GM12878 (cell line): ENCODE measurements at regions of chr12 and their contacts with region 1.

Region 1: DNA sequence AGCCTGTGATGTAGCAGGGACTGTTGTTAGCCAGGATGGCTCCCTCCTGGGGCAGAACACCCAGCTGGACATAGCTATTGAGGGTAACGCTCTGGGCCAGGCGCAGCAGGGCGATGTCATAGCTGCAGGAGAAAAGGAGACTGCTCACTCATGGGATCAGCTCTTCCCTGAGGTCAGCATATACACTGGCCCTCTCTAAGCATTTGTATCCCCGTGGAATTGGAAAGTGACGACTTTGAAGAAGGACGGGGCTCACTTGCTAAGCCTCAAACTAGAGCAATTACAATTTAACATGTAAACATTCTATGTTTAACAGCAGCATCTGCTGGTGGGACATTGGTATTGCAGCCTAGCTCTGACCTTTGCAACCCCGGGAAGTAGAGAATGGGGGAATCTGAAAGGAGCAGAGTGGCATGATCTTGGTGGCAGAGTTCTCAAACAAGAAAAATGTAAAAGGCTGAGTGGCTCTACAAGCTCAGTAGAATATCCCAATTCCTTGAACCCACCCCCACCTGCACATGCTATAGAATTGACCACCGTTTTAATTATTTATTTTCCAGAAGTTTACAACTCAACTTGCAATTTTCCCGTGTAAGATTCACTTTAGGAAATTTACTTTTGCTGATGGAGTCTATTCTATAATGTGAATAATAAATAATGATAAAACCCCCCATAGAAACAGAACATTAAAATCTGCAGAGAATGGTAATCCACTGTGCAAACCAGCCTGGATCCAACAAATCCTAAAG is 5.0 kb downstream of the CELA1 start:
- DNase-seq: peak; percentile 65
- ATAC-seq: peak; percentile 89
- H3K4me3 ChIP-seq: no peak overlapping the region
- H3K27ac ChIP-seq: no peak overlapping the region
- H3K4me1 ChIP-seq: peaks cover 20% of the 10 kb centered on the region
- H3K27me3 ChIP-seq: no peaks in the 10 kb centered on the region
- CTCF ChIP-seq: peak; percentile 99 to 100 (median 99); a peak in 5 of 6 replicates
- EP300 ChIP-seq: no peak
- POLR2A ChIP-seq: no peak
- RAD21 ChIP-seq: peak; percentile 98

Region 2: GRCh38 chr12:50763639-50764285 is 577.7 kb before region 1 on chr12 and contains the start of gene ATF1:
- CTCF ChIA-PET with region 1: interaction called, 44 read pairs
- POLR2A ChIA-PET with region 1: interaction called, 5 read pairs
- RAD21 ChIA-PET with region 1: interaction called, 37 read pairs
- SMC1A ChIA-PET with region 1: interaction called, 5 read pairs
- in situ Hi-C with region 1: no loop called
- intact Hi-C with region 1: no loop called
- DNase-seq: peak; percentile 73
- ATAC-seq: peak; percentile 85
- H3K4me3 ChIP-seq: peak within 1 kb of the TSS; percentile 96
- H3K27ac ChIP-seq: peak within 1 kb of the TSS; percentile 97
- H3K4me1 ChIP-seq: peaks cover 4% of the 10 kb centered on the region; the same call in 1 of the 2 replicates
- H3K27me3 ChIP-seq: no peaks in the 10 kb centered on the region
- CTCF ChIP-seq: no peak
- EP300 ChIP-seq: 0 out of 4 replicates have a peak, but pooled peaks of 1 of the 2 experiments have one; percentile 14
- POLR2A ChIP-seq: peak; percentile 95
- RAD21 ChIP-seq: no peak
- polyA plus RNA-seq, gene ATF1: 15.4 to 17.0 TPM

Region 3: DNA sequence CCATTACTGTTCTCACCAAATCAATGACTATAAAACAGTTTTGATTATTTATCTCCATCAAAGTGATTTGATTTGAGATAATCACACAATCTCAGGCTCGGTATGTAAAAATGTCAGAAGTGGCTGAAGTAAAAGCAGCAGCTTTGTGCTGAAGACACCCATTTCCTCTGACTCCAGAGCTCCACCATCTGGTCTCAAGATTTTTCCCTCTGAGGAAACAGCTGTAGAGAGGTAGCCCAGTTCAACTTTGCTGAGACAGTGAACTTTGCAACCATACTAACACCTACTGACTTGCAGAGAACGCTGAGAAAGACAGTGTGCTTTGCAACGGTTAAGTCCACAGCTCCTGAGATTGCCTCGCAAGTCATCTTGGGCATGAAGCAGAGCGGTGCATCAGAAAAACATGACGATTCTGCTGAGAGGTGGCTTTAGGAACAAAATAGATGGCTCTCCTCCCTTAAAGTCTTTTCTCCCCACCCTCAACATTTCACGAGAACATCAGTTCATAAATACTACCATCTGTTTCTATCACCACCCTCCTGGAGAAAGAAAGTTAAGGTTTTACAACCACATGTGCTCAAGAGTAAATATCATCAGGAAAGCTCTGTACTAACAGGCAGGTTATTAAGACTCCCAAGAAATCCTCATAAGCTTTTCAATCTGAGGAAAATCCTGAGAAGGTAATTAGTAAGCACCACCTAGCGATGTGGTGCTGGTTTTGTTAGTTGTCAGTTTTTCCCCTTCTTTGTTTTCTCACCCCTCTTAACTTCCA is 354.3 kb before region 1 on chr12:
- CTCF ChIA-PET with region 1: interaction called, 29 read pairs
- POLR2A ChIA-PET with region 1: no interaction called
- RAD21 ChIA-PET with region 1: interaction called, 14 read pairs
- SMC1A ChIA-PET with region 1: interaction called, 11 read pairs
- in situ Hi-C with region 1: no loop called
- intact Hi-C with region 1: no loop called
- DNase-seq: no peak
- ATAC-seq: peak; percentile 69
- H3K4me3 ChIP-seq: no peak overlapping the region
- H3K27ac ChIP-seq: no peak overlapping the region
- H3K4me1 ChIP-seq: peaks cover 17% of the 10 kb centered on the region
- H3K27me3 ChIP-seq: no peaks in the 10 kb centered on the region
- CTCF ChIP-seq: peak; percentile 45 to 68 (median 64); a peak in 5 of 6 replicates
- EP300 ChIP-seq: no peak
- POLR2A ChIP-seq: no peak
- RAD21 ChIP-seq: peak; percentile 77

Region 4: GRCh38 chr12:51083126-51083833 is 258.2 kb before region 1 on chr12 and contains the start of gene CSRNP2:
- CTCF ChIA-PET with region 1: interaction called, 10 read pairs
- POLR2A ChIA-PET with region 1: no interaction called
- RAD21 ChIA-PET with region 1: no interaction called
- SMC1A ChIA-PET with region 1: interaction called, 3 read pairs
- in situ Hi-C with region 1: no loop called
- intact Hi-C with region 1: no loop called
- DNase-seq: peak; percentile 59
- ATAC-seq: peak; percentile 99
- H3K4me3 ChIP-seq: peak within 1 kb of the TSS; percentile 83
- H3K27ac ChIP-seq: peak within 1 kb of the TSS; percentile 18; the same call in 1 of the 2 replicates
- H3K4me1 ChIP-seq: peaks cover 5% of the 10 kb centered on the region; the same call in 1 of the 2 replicates
- H3K27me3 ChIP-seq: no peaks in the 10 kb centered on the region
- CTCF ChIP-seq: peak in 1 of 3 experiments; percentile 26; a peak in 2 of 6 replicates
- EP300 ChIP-seq: no peak
- POLR2A ChIP-seq: peak; percentile 100
- RAD21 ChIP-seq: no peak
- polyA plus RNA-seq, gene CSRNP2: 1.2 to 1.4 TPM

Region 5: GRCh38 chr12:51254592-51254991 is 86.8 kb before region 1 on chr12:
- CTCF ChIA-PET with region 1: interaction called, 16 read pairs
- POLR2A ChIA-PET with region 1: no interaction called
- RAD21 ChIA-PET with region 1: interaction called, 8 read pairs
- SMC1A ChIA-PET with region 1: interaction called, 11 read pairs
- in situ Hi-C with region 1: no loop called
- intact Hi-C with region 1: no loop called
- DNase-seq: no peak
- ATAC-seq: no peak
- H3K4me3 ChIP-seq: no peak overlapping the region
- H3K27ac ChIP-seq: no peak overlapping the region
- H3K4me1 ChIP-seq: no peaks in the 10 kb centered on the region
- H3K27me3 ChIP-seq: no peaks in the 10 kb centered on the region
- CTCF ChIP-seq: no peak
- EP300 ChIP-seq: no peak
- POLR2A ChIP-seq: no peak
- RAD21 ChIP-seq: no peak

Region 6: DNA sequence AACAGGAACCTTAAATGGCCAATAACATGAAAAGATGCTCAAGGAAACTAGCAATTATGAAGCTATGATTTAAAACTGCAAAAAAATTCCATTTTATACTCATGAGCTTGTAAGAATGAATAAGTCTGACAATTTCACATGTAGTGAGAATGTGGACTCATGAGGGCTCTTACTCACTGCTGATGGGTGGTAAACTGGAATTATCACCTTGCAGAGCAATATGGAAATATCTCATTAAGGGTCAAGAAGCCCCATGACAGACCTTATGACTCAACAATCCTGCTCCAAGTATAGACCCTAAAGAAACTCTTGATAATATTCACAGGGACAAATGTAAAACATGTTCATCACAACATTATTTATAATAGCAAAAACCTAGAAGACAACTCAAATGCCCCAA is 47.7 kb before region 1 on chr12:
- CTCF ChIA-PET with region 1: interaction called, 28 read pairs
- POLR2A ChIA-PET with region 1: no interaction called
- RAD21 ChIA-PET with region 1: interaction called, 5 read pairs
- SMC1A ChIA-PET with region 1: interaction called, 8 read pairs
- in situ Hi-C with region 1: no loop called
- intact Hi-C with region 1: no loop called
- DNase-seq: no peak
- ATAC-seq: no peak
- H3K4me3 ChIP-seq: no peak overlapping the region
- H3K27ac ChIP-seq: no peak overlapping the region
- H3K4me1 ChIP-seq: no peaks in the 10 kb centered on the region
- H3K27me3 ChIP-seq: no peaks in the 10 kb centered on the region
- CTCF ChIP-seq: no peak
- EP300 ChIP-seq: no peak
- POLR2A ChIP-seq: no peak
- RAD21 ChIP-seq: no peak

Region 7: DNA sequence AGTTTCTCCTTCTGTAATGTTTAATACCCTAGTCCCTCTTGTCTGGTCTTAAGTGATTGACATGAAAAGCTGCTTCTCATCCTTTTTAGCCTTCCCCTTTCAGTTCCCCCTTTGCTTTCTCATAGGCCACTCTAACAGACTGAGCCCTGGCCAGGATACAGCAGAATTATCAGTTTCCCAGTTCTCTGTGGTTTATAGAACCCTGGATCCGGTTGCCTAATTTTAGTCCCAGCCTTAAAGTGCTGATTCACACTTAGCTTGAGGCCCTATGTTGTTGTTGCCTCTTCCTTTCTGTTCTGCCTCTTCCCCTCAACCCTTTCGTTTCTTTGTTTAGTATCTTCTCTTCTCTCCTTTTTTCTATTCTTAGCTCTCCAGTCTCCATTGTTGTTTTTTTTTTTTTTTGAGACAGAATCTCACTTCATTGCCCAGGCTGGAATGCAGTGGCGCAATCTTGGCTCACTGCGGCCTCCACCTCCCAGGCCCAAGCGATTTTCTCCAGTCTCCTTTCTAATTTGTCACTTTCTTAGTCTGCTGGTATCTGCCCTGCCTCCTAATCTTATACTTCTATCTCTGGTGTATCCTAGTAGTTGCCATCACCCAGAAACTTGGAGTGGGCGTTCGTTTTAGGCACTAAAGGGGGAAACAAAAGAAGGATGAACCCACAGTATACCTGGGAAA is 14.5 kb before region 1 on chr12:
- CTCF ChIA-PET with region 1: interaction called, 54 read pairs
- POLR2A ChIA-PET with region 1: interaction called, 3 read pairs
- RAD21 ChIA-PET with region 1: interaction called, 15 read pairs
- SMC1A ChIA-PET with region 1: interaction called, 58 read pairs
- in situ Hi-C with region 1: no loop called
- intact Hi-C with region 1: no loop called
- DNase-seq: peak; percentile 77
- ATAC-seq: peak; percentile 43
- H3K4me3 ChIP-seq: peak overlapping the region; percentile 41; the same call in 1 of the 2 replicates
- H3K27ac ChIP-seq: peak overlapping the region; percentile 83
- H3K4me1 ChIP-seq: peaks cover 41% of the 10 kb centered on the region
- H3K27me3 ChIP-seq: no peaks in the 10 kb centered on the region
- CTCF ChIP-seq: no peak
- EP300 ChIP-seq: 0 out of 4 replicates have a peak, but pooled peaks of 1 of the 2 experiments have one; percentile 12
- POLR2A ChIP-seq: no peak
- RAD21 ChIP-seq: no peak